ENCODE measurements at regions of chr16 and their contacts with region 1.

Region 1: DNA sequence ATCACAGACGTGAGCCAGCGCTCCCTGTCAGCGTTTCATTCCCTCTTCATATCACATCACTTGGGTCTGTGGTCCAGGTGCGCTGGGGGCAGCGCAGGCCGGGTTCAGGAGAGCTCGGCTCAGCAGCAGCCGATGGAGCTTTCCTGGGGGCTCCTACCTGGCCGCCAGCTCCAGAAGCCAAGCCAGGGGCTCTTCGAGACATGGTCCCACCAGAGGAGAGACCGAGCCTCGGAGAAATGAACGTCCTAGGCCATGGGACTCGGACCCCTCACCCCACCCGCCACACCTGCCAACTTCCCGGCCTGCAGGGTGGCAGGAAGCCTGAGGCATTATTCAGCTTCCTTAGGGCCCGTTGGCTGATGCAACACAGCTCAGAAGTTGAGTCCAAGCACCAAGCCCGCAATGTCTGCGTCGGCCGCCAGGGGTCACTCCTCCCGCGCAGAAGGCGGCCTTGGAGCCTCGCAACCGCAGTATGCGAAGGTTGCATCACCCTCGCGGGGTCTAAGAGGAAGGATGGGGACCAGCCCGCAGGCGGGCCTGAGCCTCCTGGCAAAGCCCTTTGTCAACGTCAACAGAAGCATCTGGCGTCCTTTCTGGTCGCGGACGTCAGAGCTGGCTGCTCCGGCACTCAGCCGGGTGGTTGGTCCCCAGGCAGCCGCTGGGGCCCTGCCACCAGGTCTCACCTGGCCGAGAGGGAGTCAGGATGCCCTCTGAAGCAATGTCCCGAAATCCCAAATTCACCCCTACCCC is 13.2 kb upstream of the KLHDC4 start:
- DNase-seq: peak; percentile 84
- CTCF ChIP-seq: peak; percentile 98

Region 2: DNA sequence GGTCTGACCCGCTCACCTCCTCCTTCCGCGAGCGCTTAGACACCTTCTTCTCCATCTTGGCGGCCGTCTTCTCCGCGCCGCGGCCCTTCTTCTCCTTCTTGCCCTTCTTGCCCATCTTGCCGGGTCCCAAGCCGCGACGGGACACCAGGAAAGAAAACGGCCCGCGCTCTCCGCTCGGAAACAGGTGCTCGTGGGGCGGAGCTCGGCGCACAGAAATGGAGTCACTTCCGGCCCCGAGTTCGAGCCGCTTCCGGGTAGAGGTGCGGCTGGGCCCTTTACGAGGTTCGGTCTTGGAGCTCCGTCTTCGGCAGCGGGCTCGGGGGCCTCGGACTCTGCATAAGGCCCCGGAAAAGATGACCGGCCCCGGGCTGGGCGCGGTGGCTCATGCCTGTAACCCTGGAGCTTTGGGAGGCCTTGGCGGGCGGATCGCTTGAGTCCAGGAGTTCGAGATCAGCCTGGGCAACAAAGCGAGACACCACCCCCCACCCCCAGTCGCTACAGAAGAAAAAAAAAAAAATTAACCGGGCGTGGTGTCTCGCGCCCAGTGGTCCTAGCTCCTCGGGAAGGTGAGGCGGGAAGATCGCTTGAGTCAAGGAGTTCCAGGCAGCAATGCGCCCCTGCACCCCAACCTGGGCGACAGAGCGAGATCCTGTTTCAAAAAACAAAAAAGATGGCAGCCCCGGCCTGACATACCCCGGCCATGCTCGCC is 13.1 kb before region 1 on chr16 and contains the start of gene KLHDC4:
- CTCF ChIA-PET with region 1: interaction called, 53 read pairs
- POLR2A ChIA-PET with region 1: no interaction called
- DNase-seq: peak; percentile 95
- CTCF ChIP-seq: no peak

Region 3: GRCh38 chr16:87821376-87822107 is 42.5 kb after region 1 on chr16:
- CTCF ChIA-PET with region 1: interaction called, 20 read pairs
- POLR2A ChIA-PET with region 1: no interaction called
- DNase-seq: no peak
- CTCF ChIP-seq: no peak

Region 4: DNA sequence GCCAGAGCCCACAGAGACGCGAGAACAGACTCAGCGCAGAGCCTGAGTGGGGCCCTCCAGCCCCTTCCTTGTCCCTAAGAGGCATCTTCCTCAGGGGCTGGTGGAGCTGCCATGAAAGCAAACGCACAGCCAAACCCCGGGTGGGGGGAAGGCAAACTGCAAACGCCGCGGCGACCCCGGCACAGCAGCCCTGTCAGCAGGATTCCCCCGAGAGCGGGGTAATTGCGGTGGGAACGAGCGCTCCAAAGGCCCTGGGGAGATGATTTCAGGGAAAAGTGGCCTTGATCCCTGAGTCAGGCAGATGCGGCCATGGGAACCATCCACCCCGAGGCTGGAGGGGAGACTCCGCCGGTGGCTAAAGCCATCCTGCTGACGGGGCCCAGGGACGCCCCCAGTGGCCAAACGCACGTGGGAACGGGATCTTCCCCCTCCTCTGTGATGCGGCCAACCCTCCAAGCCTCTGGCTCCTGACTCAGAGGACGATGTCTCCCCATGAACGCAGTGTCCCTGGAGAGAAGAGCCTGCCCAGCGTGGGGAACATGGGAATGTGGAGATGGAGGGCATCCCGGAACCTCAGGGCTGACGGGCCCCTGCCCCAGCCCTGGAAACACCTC is 65.2 kb after region 1 on chr16:
- CTCF ChIA-PET with region 1: interaction called, 108 read pairs
- POLR2A ChIA-PET with region 1: no interaction called
- DNase-seq: no peak
- CTCF ChIP-seq: no peak

Region 5: DNA sequence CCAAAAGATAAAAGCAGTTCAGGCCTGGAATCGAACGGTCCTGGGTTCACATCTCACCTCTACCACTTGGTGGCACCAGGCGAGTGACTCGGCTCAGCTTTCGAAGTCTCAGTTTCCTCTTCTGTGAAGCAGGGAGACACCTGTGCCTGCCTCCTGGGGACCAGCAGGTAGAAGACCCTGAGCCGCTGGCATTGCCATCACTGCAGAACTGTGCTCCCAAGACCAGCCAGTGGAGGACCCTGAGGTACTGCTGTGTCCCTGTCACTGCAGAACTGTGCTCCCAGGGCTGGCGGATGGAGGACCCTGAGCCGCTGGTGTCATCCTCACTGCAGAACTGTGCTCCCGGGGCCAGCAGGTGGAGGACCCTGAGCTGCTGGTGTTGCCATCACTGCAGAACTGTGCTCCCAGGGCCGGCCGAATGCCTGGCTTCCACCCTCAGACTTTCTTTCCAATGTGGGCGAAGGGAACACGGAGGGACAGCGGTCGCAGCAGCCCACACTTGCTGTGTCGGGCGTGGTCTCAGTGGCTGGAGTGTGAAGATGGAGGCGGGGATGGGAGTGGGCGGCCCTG is 99.0 kb after region 1 on chr16:
- CTCF ChIA-PET with region 1: interaction called, 236 read pairs
- POLR2A ChIA-PET with region 1: interaction called, 3 read pairs
- DNase-seq: no peak
- CTCF ChIP-seq: peak; percentile 25

Region 6: DNA sequence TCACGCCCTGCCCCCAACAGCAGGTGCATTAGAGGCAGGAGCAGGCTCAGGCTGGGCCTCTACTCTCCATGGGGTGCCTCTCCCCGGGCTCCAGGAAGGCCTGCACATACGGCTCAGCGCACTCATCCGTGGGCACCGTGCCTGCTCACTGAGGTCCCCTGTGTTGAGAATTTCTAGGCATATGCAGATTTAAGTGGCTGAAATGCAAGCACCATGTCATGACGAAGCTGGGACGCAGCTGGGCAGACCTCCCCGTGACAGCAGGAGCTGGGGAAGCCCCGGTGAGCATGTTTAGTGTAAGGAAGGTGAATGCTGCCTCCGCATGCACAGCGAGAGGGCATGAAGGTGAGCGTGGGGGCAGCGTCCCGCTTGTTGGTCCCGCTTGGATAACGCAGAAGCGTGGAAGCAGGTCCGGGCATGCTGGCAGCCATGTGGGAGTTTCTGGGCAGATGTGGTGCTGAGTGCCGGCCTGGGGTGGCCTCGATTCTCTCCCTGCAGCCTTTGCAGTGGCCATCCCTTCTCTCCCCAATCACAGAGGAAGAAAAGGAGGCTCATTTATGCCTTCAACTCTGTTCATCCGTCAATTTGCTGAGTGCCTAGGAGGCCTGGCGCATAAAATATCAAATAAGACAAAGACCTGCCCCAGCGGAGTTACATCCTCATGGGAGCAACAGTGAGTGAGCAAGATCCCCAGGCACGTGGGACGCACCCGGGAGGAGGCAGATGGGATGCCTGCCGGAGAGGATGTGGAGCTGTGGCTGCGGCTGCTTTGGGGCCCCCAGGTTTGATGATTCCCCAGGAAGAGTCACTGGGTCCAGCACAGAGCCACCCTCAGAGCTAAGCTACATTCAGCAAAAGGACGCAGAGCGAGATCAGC is 145.7 kb after region 1 on chr16:
- CTCF ChIA-PET with region 1: interaction called, 13 read pairs
- POLR2A ChIA-PET with region 1: no interaction called
- DNase-seq: peak; percentile 88
- CTCF ChIP-seq: no peak

Region 7: GRCh38 chr16:88063211-88063773 is 284.3 kb after region 1 on chr16:
- CTCF ChIA-PET with region 1: no interaction called
- POLR2A ChIA-PET with region 1: no interaction called
- DNase-seq: no peak
- CTCF ChIP-seq: no peak

Measured in GM10248 (cell line).